ENCODE measurements at regions of chr2 and their contacts with region 1.

Region 1: DNA sequence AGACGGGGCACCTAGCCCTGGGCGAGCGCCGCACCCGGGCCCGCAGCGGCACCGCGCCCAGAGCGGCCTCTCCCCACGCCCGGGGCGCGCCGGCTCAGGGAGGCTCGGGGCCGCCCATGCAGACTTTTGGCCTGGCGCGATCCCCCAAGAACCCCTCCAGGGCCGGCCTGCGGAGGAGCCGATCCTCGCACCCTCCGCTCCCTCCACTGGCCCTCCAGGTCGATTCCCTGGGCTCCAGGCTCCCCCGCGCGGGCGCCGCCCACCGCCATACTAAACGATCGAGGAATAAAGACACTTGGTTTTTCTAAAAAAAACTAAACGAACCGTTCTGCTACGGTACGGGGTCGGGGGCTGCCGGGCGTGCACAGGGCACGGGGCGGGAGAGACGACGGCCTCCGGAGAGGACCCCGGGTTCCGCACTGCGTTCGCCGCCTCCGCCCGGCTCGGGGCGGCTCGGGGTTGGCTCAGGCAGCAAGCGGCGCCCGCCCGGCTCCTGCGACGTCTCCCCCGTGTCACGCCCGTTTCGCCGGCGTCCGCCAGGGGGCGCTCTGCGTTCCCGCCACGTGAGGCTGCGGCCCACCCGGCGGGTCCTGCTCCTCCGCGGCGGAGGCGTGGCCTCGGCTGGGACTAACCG is 365 bp upstream of the KHK start:
- DNase-seq: peak; percentile 87
- H3K4me3 ChIP-seq: peak overlapping the region; percentile 57 to 84 (median 63)
- H3K27ac ChIP-seq: peak overlapping the region; percentile 3
- H3K4me1 ChIP-seq: peaks cover 28% of the 10 kb centered on the region
- H3K27me3 ChIP-seq: no peaks in the 10 kb centered on the region
- CTCF ChIP-seq: peak; percentile 59 to 79

Region 2: GRCh38 chr2:27032495-27033252 is 53.5 kb before region 1 on chr2 and contains the start of gene TMEM214:
- CTCF ChIA-PET with region 1: no interaction called
- dilution Hi-C with region 1: no loop called
- in situ Hi-C with region 1: no loop called
- intact Hi-C with region 1: loop called (anchors 5 kb)
- DNase-seq: peak; percentile 80
- H3K4me3 ChIP-seq: peak within 1 kb of the TSS; percentile 70 to 100 (median 96)
- H3K27ac ChIP-seq: peak within 1 kb of the TSS; percentile 71
- H3K4me1 ChIP-seq: peaks cover 11% of the 10 kb centered on the region
- H3K27me3 ChIP-seq: no peaks in the 10 kb centered on the region
- CTCF ChIP-seq: no peak
- total RNA-seq, gene TMEM214: 27.3 to 90.7 TPM

Region 3: GRCh38 chr2:27050281-27050995 is 35.8 kb before region 1 on chr2:
- CTCF ChIA-PET with region 1: no interaction called
- dilution Hi-C with region 1: no loop called
- in situ Hi-C with region 1: no loop called
- intact Hi-C with region 1: loop called (anchors 1 kb)
- DNase-seq: peak; percentile 91
- H3K4me3 ChIP-seq: peak overlapping the region; percentile 59 to 99 (median 74)
- H3K27ac ChIP-seq: peak overlapping the region; percentile 37
- H3K4me1 ChIP-seq: peaks cover 15% of the 10 kb centered on the region
- H3K27me3 ChIP-seq: no peaks in the 10 kb centered on the region
- CTCF ChIP-seq: peak in 1 of 2 donors; percentile 51

Region 4: GRCh38 chr2:27071277-27071989 is 14.8 kb before region 1 on chr2 and contains the start of gene OST4:
- CTCF ChIA-PET with region 1: interaction called, 3 read pairs
- dilution Hi-C with region 1: no loop called
- in situ Hi-C with region 1: no loop called
- intact Hi-C with region 1: loop called (anchors 1 kb)
- DNase-seq: peak; percentile 90
- H3K4me3 ChIP-seq: peak within 1 kb of the TSS; percentile 79 to 98 (median 91)
- H3K27ac ChIP-seq: peak within 1 kb of the TSS; percentile 76
- H3K4me1 ChIP-seq: peaks cover 16% of the 10 kb centered on the region
- H3K27me3 ChIP-seq: no peaks in the 10 kb centered on the region
- CTCF ChIP-seq: no peak
- total RNA-seq, gene OST4: 121 to 313 TPM

Region 5: GRCh38 chr2:27233341-27233740 is 147.1 kb after region 1 on chr2:
- CTCF ChIA-PET with region 1: no interaction called
- dilution Hi-C with region 1: no loop called
- in situ Hi-C with region 1: no loop called
- intact Hi-C with region 1: no loop called
- DNase-seq: no peak
- H3K4me3 ChIP-seq: no peak overlapping the region
- H3K27ac ChIP-seq: no peak overlapping the region
- H3K4me1 ChIP-seq: no peaks in the 10 kb centered on the region
- H3K27me3 ChIP-seq: no peaks in the 10 kb centered on the region
- CTCF ChIP-seq: no peak

Measured in mammary epithelial cell (primary cell).